ENCODE measurements at regions of chr14 and their contacts with region 1.

Region 1: DNA sequence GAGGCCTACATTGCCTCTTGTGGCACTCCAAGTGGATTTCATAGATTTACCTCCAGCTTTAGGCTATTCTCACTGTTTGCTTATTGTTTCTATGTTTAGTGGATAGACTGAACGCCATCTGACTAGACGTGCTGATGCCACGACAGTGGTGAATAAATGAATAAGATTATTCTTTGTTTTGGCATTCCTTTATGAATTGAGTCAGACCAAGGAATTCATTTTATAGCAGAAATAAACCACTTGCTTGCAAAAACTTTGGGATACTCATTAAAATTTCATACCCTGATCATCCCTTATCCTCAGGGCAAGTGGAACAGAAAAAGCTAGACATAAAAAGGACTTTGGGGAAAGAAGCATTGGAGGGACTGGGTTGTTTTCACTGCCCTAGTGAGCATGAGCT is 71.7 kb upstream of the FERMT2 start:
- DNase-seq: peak; percentile 87
- ATAC-seq: peak; percentile 96
- H3K4me3 ChIP-seq: no peak overlapping the region
- H3K27ac ChIP-seq: peak overlapping the region; percentile 17
- H3K4me1 ChIP-seq: peaks cover 19% of the 10 kb centered on the region
- H3K27me3 ChIP-seq: no peaks in the 10 kb centered on the region
- CTCF ChIP-seq: no peak

Region 2: DNA sequence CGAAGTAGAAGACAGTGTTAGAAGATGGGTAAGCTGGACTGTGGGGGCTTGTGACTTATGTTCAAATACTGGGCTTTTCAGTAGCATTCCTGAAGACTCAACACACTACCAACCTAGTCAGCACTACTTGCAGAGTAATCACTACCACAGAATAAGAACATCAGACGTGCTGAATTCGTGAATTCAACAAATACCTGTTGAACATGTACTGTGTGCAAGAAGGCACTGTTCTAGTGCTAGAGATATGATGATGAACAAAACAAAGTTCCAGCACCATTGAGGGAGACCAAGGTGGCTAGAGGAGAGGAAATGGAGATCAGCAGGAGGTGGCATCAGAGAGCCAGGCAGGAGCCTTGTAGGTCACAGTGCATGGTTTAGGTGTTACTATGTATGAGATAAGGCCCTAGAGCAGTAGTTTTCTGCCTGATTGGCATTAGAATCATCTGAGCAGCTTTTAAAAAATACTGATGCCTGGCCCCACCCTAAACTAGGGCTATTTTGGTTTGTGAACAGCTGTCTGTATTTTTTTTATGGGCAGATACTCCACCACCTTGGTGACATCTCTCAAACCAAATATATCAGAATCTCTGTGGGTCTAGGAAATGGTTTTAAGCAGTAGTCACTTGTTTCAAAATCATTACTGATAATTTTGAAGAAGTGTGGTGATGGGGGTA is 98.6 kb before region 1 on chr14:
- CTCF ChIA-PET with region 1: no interaction called
- POLR2A ChIA-PET with region 1: no interaction called
- intact Hi-C with region 1: loop called (anchors 5 kb)
- DNase-seq: no peak
- ATAC-seq: peak; percentile 4; the same call in 1 of the 2 replicates
- H3K4me3 ChIP-seq: no peak overlapping the region
- H3K27ac ChIP-seq: no peak overlapping the region
- H3K4me1 ChIP-seq: peaks cover 69% of the 10 kb centered on the region
- H3K27me3 ChIP-seq: no peaks in the 10 kb centered on the region
- CTCF ChIP-seq: peak; percentile 33; the same call in 1 of the 2 replicates

Region 3: DNA sequence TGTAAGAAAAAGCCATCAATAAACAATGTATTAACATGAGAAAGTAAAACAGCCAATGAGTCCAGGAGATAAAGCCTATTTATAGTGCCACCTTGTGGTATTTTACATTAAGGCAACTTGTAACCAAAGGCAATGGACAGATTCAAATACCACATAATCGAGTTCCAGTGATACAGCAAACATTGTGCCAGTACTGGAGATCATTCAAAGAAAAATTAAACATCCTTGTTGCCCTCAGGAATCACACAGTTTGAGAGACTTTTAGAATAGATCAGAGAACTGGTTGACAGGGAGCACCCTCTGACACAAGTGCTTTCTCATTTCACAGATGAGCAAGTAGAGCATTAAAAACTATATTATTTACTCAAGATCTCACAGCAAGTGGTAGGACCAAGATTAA is 32.4 kb after region 1 on chr14:
- CTCF ChIA-PET with region 1: no interaction called
- POLR2A ChIA-PET with region 1: no interaction called
- intact Hi-C with region 1: loop called (anchors 1 kb)
- DNase-seq: peak; percentile 78
- ATAC-seq: peak; percentile 95
- H3K4me3 ChIP-seq: no peak overlapping the region
- H3K27ac ChIP-seq: no peak overlapping the region
- H3K4me1 ChIP-seq: peaks cover 1% of the 10 kb centered on the region; the same call in 1 of the 2 replicates
- H3K27me3 ChIP-seq: no peaks in the 10 kb centered on the region
- CTCF ChIP-seq: peak; percentile 94

Measured in PC-3 (cell line).